ENCODE measurements at regions of chr15 and their contacts with region 1.

Region 1: GRCh38 chr15:71103102-71103676 is 12.1 kb upstream of the THSD4 start:
- DNase-seq: no peak
- ATAC-seq: peak in 6 of 8 donors; percentile 44 to 77 (median 62)
- H3K4me3 ChIP-seq: no peak overlapping the region
- H3K27ac ChIP-seq: no peak overlapping the region
- H3K4me1 ChIP-seq: no peaks in the 10 kb centered on the region
- H3K27me3 ChIP-seq: no peaks in the 10 kb centered on the region
- CTCF ChIP-seq: peak in 8 of 9 donors; percentile 13 to 62 (median 50)

Region 2: GRCh38 chr15:70892002-70892914 is 210.9 kb before region 1 on chr15 and contains the starts of genes LRRC49 and THAP10:
- intact Hi-C with region 1: loop called in 6 of 10 experiments (anchors 5 to 10 kb)
- DNase-seq: peak; percentile 80 to 92
- ATAC-seq: peak; percentile 94 to 99 (median 98)
- H3K4me3 ChIP-seq: peak within 1 kb of the TSS; percentile 64 to 92 (median 68)
- H3K27ac ChIP-seq: peak within 1 kb of the TSS; percentile 41 to 86 (median 72)
- H3K4me1 ChIP-seq: peaks cover 0 to 26% (median 13%) of the 10 kb centered on the region in 9 donors
- H3K27me3 ChIP-seq: no peaks in the 10 kb centered on the region
- CTCF ChIP-seq: no peak
- total RNA-seq, gene LRRC49: 28.4 to 149 (median 78.9) TPM
- total RNA-seq, gene THAP10: 3.0 to 7.0 (median 5.0) TPM

Region 3: DNA sequence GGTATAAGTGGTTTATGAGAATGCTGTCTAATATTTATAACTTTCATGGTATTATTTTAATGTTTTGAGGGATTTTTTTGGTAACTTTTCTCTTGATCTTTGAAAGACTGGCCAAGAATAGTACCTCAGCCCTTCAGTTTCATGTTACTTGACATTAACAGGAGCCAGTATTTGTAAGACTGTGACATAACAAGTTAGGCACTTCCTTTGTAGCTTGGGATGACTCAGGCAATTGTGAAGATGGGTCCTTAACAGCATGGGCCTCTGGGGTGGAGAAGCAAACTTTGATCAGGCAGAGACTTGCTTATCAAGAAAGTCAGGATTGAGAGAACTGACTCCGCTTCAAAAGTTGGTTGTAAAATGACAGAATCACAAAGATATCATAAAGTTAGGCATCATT is 201.1 kb before region 1 on chr15:
- intact Hi-C with region 1: loop called in 6 of 10 experiments (anchors 5 to 10 kb)
- DNase-seq: no peak
- ATAC-seq: no peak
- H3K4me3 ChIP-seq: no peak overlapping the region
- H3K27ac ChIP-seq: no peak overlapping the region
- H3K4me1 ChIP-seq: no peaks in the 10 kb centered on the region
- H3K27me3 ChIP-seq: no peaks in the 10 kb centered on the region
- CTCF ChIP-seq: no peak

Region 4: DNA sequence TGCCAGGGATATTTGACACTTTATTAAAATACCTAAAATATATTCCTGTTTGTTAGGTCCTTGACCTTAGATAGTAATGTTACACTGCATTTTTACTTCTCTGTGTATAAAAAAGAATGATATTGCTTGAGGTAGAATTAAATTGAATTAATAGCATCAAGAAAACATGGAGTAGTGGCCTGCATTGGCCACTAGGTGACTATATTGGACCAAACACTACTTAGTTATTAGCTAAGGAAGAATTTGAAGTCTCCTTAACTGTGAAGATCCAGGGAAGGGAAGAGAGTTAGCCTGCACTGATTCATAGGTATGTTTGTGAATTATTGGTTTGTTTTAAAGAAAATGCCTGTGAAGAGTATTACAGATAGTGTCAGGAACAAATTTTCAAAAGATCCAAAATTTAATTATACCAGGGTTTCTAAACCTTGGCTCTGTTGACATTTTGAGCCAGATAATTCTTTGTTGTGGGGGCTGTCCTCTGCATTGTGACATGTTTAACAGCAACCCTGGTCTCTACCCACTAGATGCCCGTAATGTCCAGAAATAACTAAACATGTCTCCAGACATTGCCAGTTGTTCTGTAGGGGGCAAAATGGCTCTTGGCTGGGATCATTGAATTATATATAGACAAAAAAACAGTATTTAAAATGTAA is 91.6 kb before region 1 on chr15:
- intact Hi-C with region 1: loop called in 5 of 10 experiments (anchors 5 to 10 kb)
- DNase-seq: no peak
- ATAC-seq: peak in 7 of 8 donors; percentile 71 to 84 (median 81)
- H3K4me3 ChIP-seq: peak overlapping the region in 5 of 10 donors; percentile 20 to 50 (median 48)
- H3K27ac ChIP-seq: peak overlapping the region in 2 of 10 donors; percentile 4 to 80
- H3K4me1 ChIP-seq: peaks cover 0 to 10% (median 3%) of the 10 kb centered on the region in 9 donors
- H3K27me3 ChIP-seq: no peaks in the 10 kb centered on the region
- CTCF ChIP-seq: peak; percentile 42 to 75 (median 70)

Measured in heart right ventricle (tissue), 16 donors.